ENCODE measurements at regions of chr20 and their contacts with region 1.

Region 1: GRCh38 chr20:31572701-31573554 is 32.2 kb upstream of the ID1 start:
- DNase-seq: peak; percentile 96
- ATAC-seq: peak; percentile 88 to 92

Region 2: DNA sequence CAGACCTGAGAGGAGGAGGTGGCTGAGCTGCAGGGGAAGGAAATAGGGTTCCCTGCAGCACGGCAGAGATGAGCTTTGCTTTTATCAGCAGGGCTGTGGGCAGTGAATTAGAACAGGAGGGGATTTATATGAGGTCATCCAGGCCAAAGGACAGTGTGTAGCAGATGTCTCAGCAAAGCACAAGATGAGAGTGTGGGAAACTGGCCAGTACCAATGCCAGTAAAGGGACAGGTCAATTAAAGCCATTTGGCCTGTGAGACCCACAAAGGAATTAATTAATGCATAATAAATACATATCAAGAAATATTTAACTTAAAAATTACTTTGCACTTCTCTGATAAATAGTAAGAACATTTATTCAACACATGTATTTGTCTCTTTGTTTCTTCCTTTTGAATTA is 182.4 kb before region 1 on chr20 and contains the start of gene DEFB119:
- intact Hi-C with region 1: no loop called
- DNase-seq: no peak
- ATAC-seq: no peak
- total RNA-seq, gene DEFB119: not detected

Region 3: GRCh38 chr20:31523361-31524283 is 49.3 kb before region 1 on chr20:
- intact Hi-C with region 1: no loop called
- DNase-seq: peak; percentile 36
- ATAC-seq: peak; percentile 38 to 71

Region 4: GRCh38 chr20:31605031-31605901 is 32.3 kb after region 1 on chr20 and contains the start of gene ID1:
- intact Hi-C with region 1: loop called in 1 of 2 experiments (anchors 2 kb)
- DNase-seq: peak; percentile 98
- ATAC-seq: peak; percentile 89 to 92
- total RNA-seq, gene ID1: 103 to 222 TPM

Region 5: GRCh38 chr20:31712564-31713311 is 139.8 kb after region 1 on chr20:
- intact Hi-C with region 1: loop called in 1 of 2 experiments (anchors 5 kb)
- DNase-seq: peak; percentile 89
- ATAC-seq: peak; percentile 82 to 91

Region 6: DNA sequence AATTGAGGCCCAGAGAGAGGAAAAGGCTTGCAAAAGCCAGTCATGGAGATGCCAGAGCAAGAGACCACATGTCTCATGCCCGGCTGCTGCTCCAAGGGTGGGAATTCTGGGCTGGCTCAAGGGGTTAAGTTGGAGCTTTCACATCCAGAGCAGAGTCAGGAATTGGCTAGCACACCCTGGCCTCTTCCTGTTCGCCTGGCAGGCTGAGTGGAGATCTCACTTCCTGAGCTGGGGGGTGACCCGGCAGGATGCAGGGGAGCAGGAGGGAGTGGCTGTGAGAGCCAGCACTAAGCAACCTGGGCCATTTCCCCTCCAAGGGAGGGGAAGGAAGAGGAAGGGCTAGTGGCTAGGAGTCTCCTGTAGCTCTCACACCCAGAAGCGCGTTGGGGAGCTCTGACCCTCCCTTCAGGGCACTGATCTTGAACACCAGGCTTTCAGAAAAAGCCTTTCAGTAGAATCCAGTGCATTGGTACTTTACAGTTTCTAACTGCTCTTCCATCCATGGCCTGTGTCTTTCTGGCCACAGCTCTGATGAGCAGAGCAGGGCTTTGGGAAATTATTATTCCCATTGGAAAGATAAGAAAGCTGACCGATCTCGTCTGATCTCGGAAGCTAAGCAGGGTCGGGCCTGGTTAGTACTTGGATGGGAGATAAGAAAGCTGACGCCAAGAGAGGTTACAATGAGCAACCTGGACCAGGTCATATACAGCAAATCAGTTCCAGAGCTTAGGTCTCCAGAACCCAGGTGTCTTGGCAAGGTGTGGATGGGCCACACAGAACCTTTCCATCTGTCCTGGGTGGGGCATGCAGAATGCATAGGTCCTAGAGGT is 435.1 kb after region 1 on chr20:
- intact Hi-C with region 1: no loop called
- DNase-seq: peak; percentile 83
- ATAC-seq: peak; percentile 86 to 89

Measured in left cardiac atrium (tissue), 4 donors.